ENCODE measurements at regions of chr9 and their contacts with region 1.

Region 1: DNA sequence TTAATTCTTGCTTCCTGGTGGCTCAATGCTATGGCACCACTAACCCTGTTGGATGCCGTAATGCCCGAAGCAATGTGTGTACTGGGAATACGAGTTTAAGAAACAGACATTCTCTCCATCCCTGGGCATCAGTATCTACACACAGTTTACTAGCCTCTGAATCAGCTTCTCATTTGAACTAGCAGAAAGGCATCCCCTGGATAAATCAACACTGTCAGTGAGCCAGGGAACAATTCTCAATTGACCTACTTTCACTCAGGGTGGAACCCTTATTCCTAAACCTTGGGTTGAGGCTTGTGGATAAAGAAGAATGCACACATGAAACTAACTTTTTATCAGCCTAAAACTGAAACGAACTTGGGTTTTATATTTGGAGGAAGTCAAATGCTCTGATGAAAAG is 331.0 kb downstream of the GADD45G start:
- DNase-seq: no peak
- H3K4me3 ChIP-seq: no peak overlapping the region
- H3K27ac ChIP-seq: peak overlapping the region in 1 of 2 donors; percentile 12
- H3K4me1 ChIP-seq: peaks cover 6% of the 10 kb centered on the region
- H3K27me3 ChIP-seq: no peaks in the 10 kb centered on the region
- CTCF ChIP-seq: no peak
- EP300 ChIP-seq: no peak
- POLR2A ChIP-seq: no peak

Region 2: GRCh38 chr9:88922031-88922430 is 1013.8 kb before region 1 on chr9:
- intact Hi-C with region 1: loop called in 1 of 4 experiments (anchors 5 kb)
- DNase-seq: no peak
- H3K4me3 ChIP-seq: no peak overlapping the region
- H3K27ac ChIP-seq: no peak overlapping the region
- H3K4me1 ChIP-seq: no peaks in the 10 kb centered on the region
- H3K27me3 ChIP-seq: no peaks in the 10 kb centered on the region
- CTCF ChIP-seq: no peak
- EP300 ChIP-seq: no peak
- POLR2A ChIP-seq: no peak

Region 3: DNA sequence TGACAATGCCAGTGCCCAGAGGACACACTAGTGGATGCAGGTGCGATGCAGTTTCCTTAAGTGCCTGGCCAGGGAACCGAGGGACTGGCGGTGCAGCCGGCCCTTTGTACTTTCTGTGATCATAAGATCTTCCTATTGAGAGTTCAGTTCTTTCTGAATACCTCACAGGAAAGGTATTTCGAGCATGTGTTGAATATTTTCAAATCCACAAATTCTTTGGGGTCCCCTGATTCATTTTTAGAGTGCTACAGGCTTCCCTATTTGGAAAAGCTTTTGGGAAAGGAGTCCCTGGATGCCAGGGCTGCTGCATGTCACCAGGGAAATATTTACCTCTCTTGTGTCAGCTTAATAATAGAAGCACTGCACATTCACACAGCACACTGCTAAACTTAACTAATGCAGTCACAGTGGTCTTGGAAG is 49.5 kb before region 1 on chr9:
- intact Hi-C with region 1: no loop called
- DNase-seq: no peak
- H3K4me3 ChIP-seq: no peak overlapping the region
- H3K27ac ChIP-seq: no peak overlapping the region
- H3K4me1 ChIP-seq: peaks cover 2% of the 10 kb centered on the region
- H3K27me3 ChIP-seq: no peaks in the 10 kb centered on the region
- CTCF ChIP-seq: no peak
- EP300 ChIP-seq: no peak
- POLR2A ChIP-seq: no peak